Prostate gland (tissue), 2 donors: ENCODE measurements at regions of chr3 and their contacts with region 1.

Region 1: DNA sequence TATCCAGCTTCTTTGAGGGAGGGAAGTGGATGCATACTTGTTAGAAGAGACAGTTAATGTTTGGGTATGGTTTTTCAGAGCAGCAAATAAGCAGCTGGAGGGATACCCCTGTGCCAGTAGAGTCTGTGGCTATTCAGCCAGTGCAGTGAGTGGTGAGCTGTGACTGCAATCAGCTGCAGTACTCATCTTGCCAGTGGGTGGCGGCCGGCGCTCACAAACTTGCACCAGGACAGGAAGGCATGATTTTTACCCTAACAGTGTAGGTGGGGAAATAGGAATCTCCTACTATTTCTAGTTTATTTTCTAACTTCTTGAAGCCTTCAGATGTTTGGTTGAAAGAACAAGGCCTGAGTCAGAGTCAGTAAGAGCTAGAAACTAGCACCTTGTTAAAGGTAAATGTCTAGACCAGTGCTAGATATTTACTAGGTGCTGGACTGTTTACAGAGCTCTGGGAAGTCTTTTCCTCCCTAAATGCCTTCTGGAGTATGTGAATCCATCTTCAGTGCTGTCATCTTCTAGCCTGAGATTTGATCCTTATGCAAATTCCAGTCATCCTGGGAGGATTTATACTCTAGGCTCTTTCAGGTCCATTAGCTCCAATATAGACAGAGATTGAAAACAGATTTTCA is 23.6 kb downstream of the TIMP4 start:
- DNase-seq: peak; percentile 59
- H3K4me3 ChIP-seq: no peak overlapping the region
- H3K27ac ChIP-seq: no peak overlapping the region
- H3K4me1 ChIP-seq: no peaks in the 10 kb centered on the region
- H3K27me3 ChIP-seq: no peaks in the 10 kb centered on the region
- CTCF ChIP-seq: peak; percentile 48 to 84 (median 76)
- POLR2A ChIP-seq: no peak

Region 2: GRCh38 chr3:12175844-12176453 is 40.8 kb after region 1 on chr3:
- intact Hi-C with region 1: loop called (anchors 5 kb)
- DNase-seq: peak; percentile 48
- H3K4me3 ChIP-seq: no peak overlapping the region
- H3K27ac ChIP-seq: no peak overlapping the region
- H3K4me1 ChIP-seq: peaks cover 3% of the 10 kb centered on the region
- H3K27me3 ChIP-seq: no peaks in the 10 kb centered on the region
- CTCF ChIP-seq: peak; percentile 45 to 84 (median 74)
- POLR2A ChIP-seq: no peak

Region 3: DNA sequence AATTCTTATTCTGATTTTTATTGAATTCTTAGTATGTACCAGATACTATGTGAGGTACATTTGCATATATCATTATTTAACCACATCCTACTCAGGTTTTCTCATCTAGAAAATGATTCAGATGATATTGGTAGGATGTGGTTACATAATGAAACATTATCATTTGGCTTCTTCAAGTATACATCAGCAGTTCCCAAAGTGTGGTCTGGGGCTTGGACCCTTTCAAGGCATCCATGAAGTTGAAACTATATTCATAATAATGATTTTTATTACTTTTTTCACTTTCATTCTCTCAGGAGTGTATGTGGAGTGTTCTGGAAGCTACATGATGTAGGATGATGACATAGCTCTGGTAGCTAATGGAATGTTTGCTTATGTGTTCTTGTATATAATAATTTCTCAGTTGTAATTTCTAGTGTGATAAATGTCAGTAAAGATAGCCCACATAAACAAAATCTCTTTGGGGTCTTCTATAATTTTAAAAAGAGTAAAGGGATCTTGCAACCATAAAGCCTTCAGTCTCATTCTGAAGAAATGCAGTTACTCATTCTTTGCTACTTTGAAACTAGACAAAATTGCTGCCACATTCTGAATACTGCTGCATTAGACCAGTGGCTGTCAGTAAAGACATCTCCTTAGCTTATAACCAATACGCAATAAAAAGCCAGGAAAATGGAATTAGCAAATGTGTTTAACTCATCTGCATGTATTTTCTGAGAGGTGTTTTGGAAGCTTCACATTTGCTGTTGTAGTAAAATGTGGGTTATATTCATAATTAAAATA is 249.5 kb after region 1 on chr3:
- intact Hi-C with region 1: no loop called
- DNase-seq: no peak
- H3K4me3 ChIP-seq: no peak overlapping the region
- H3K27ac ChIP-seq: no peak overlapping the region
- H3K4me1 ChIP-seq: no peaks in the 10 kb centered on the region
- H3K27me3 ChIP-seq: no peaks in the 10 kb centered on the region
- CTCF ChIP-seq: no peak
- POLR2A ChIP-seq: no peak

Region 4: GRCh38 chr3:12484198-12484974 is 349.2 kb after region 1 on chr3 and contains the start of gene TSEN2:
- intact Hi-C with region 1: loop called (anchors 2 kb)
- DNase-seq: peak; percentile 90
- H3K4me3 ChIP-seq: peak within 1 kb of the TSS; percentile 55 to 75
- H3K27ac ChIP-seq: peak within 1 kb of the TSS; percentile 49 to 59
- H3K4me1 ChIP-seq: no peaks in the 10 kb centered on the region
- H3K27me3 ChIP-seq: no peaks in the 10 kb centered on the region
- CTCF ChIP-seq: peak in 3 of 4 experiments; percentile 34 to 62 (median 55)
- POLR2A ChIP-seq: peak; percentile 96
- total RNA-seq, gene TSEN2: 13.8 to 14.9 TPM